ENCODE measurements at regions of chr17 and their contacts with region 1.

Region 1: DNA sequence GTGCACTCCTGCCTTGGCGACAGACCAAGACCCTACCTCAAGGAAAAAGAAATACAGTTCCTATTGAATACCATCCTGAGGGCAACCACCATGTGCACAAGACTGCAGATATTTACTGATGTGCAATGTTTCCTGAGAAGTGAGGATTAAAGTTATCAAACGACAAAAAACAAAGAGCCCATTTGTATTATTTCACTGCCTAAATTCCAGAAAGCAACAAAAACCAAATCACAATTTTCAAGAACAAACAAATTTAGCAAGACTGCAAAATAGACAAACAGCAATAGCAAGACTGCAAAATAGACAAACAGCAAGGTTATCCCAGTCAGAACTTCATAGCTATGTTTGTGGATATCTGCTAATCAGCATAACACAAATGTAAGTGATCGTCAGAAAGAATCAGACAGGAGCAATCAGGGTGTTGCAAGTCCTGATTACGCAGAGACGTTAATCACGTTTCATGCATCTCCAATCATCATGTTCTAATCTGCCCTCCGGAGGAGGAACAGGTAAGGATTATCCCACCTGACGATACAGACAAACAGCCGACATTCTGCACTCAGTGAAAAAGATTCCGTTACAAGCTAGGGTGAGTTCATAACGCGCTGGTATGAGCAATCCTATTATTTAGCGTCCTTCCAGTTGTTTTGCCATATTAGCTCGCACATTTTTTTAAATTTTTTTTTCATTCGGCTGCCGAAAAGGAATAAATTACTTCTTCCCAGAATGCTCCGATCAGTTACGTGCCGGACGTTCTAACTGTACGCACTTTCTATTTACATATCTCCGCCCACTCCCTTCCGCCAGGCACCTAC is 2.9 kb downstream of the TMEM107 start:
- DNase-seq: peak; percentile 88
- H3K4me3 Mint-ChIP-seq: peak overlapping the region; percentile 95
- H3K27ac Mint-ChIP-seq: peak overlapping the region; percentile 100
- H3K4me1 Mint-ChIP-seq: peaks cover 58% of the 10 kb centered on the region
- H3K27me3 Mint-ChIP-seq: no peaks in the 10 kb centered on the region

Region 2: DNA sequence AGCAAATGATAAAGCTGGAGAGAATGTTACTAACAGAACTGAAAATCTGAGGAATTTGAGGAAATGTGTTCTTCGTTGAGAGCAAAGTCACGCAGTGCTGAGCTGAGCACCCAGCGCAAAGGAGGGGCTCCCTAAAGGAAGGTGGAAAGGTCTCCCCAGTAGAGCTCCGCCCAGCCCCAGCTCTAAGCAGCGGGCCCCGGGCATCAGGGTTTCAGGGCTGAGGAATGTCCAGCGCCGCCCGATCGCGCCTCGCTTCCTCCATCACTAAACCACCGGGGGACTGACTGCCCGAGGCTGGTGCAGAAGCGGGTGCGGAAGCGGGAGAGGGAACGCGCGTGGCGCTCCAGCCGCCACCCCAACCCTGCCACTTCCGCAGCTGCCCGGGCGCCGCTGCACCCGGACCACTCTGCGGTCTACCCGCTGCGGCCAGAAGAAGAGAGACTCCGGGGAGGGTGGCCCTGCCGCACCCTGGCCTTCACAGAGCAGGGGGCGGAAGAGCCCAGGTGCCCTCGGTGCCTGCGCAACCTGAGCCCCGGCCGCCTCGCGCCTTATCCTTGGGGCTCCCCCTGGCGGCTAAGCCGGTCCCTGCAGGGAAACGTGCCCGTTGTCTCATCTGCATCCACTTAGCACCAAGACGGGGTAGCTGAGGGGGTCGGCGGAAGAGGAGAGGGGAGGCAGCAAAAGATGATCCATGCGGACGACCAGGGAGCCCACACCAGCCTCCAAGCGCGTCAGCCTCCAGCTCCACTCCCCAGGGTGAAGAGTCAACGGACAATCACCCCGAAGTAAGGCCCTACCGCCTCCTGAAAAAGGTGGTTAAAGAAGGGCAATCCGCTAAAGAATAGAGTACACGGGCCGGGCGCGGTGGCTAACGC is 183.2 kb before region 1 on chr17:
- CTCF ChIA-PET with region 1: no interaction called
- POLR2A ChIA-PET with region 1: no interaction called
- DNase-seq: peak; percentile 92
- H3K4me3 Mint-ChIP-seq: peak overlapping the region; percentile 75
- H3K27ac Mint-ChIP-seq: peak overlapping the region; percentile 94
- H3K4me1 Mint-ChIP-seq: peaks cover 35% of the 10 kb centered on the region
- H3K27me3 Mint-ChIP-seq: peaks cover 6% of the 10 kb centered on the region

Region 3: DNA sequence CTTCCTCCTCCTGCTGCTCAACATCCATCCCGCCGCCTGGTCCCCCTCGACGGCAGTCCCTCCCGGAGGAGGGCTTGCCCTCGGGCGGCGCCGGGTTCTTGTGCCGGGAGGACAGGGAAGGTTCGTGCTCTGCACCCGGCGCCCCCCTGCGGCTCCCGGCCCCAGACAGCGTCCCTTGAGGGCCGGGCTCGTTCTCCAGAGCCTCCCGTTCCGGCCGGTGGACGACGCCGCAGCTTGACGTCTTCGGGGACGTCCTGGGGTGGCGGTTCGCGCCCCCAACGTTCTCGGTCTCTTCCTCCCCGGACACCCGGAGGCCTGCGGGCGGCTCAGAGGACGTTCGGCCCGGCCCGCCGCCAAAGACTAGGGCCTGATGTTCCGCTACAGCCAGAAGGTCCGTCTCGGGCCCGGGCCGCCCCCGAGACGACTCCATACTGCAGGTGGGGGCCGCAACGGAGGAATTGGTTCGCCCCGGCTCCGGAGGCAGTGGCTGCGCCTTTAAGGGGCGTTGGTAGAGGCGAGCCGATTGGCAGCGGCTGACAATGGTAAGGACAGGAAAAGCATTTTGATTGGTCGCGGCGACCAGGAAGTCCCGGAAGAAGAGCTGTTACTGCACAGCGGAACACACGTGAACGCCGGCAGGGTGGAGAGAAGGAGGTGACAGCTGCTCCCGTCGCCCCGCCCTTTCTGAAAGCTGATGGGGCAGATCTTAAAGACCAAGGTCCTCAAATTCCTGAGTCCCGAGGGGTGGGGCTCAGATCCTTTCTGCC is 16.6 kb after region 1 on chr17 and contains the start of gene BORCS6:
- CTCF ChIA-PET with region 1: interaction called, 7 read pairs
- POLR2A ChIA-PET with region 1: interaction called, 10 read pairs
- DNase-seq: peak; percentile 97
- H3K4me3 Mint-ChIP-seq: no peak within 1 kb of the TSS
- H3K27ac Mint-ChIP-seq: peak within 1 kb of the TSS; percentile 42
- H3K4me1 Mint-ChIP-seq: peaks cover 11% of the 10 kb centered on the region
- H3K27me3 Mint-ChIP-seq: no peaks in the 10 kb centered on the region
- total RNA-seq, gene BORCS6: 12.2 to 12.9 TPM